CD8-positive, alpha-beta memory T cell (primary cell): ENCODE measurements at regions of chr4 and their contacts with region 1.

Region 1: GRCh38 chr4:56387023-56388001 is at the start of gene AASDH:
- DNase-seq: peak; percentile 88 to 96 (median 94)
- H3K4me3 ChIP-seq: peak within 1 kb of the TSS; percentile 79
- H3K4me3 Mint-ChIP-seq: peak within 1 kb of the TSS; percentile 88 to 99 (median 93)
- H3K27ac ChIP-seq: peak within 1 kb of the TSS; percentile 97
- H3K27ac Mint-ChIP-seq: peak within 1 kb of the TSS; percentile 97 to 99 (median 98)
- H3K4me1 ChIP-seq: peaks cover 24% of the 10 kb centered on the region
- H3K4me1 Mint-ChIP-seq: peaks cover 39 to 50% (median 43%) of the 10 kb centered on the region in 3 donors
- H3K27me3 ChIP-seq: no peaks in the 10 kb centered on the region
- H3K27me3 Mint-ChIP-seq: no peaks in the 10 kb centered on the region
- total RNA-seq, gene AASDH: 8.5 to 13.0 TPM

Region 2: GRCh38 chr4:55948726-55949474 is 438.4 kb before region 1 on chr4 and contains the start of gene CEP135:
- CTCF ChIA-PET with region 1: interaction called, 8 read pairs
- POLR2A ChIA-PET with region 1: interaction called, 13 read pairs
- DNase-seq: peak; percentile 88 to 95 (median 91)
- H3K4me3 ChIP-seq: peak within 1 kb of the TSS; percentile 87
- H3K4me3 Mint-ChIP-seq: peak within 1 kb of the TSS; percentile 86 to 97 (median 94)
- H3K27ac ChIP-seq: peak within 1 kb of the TSS; percentile 82
- H3K27ac Mint-ChIP-seq: peak within 1 kb of the TSS; percentile 71 to 98 (median 94)
- H3K4me1 ChIP-seq: peaks cover 29% of the 10 kb centered on the region
- H3K4me1 Mint-ChIP-seq: peaks cover 36 to 53% (median 52%) of the 10 kb centered on the region in 3 donors
- H3K27me3 ChIP-seq: no peaks in the 10 kb centered on the region
- H3K27me3 Mint-ChIP-seq: no peaks in the 10 kb centered on the region
- total RNA-seq, gene CEP135: 15.8 to 16.1 TPM

Region 3: DNA sequence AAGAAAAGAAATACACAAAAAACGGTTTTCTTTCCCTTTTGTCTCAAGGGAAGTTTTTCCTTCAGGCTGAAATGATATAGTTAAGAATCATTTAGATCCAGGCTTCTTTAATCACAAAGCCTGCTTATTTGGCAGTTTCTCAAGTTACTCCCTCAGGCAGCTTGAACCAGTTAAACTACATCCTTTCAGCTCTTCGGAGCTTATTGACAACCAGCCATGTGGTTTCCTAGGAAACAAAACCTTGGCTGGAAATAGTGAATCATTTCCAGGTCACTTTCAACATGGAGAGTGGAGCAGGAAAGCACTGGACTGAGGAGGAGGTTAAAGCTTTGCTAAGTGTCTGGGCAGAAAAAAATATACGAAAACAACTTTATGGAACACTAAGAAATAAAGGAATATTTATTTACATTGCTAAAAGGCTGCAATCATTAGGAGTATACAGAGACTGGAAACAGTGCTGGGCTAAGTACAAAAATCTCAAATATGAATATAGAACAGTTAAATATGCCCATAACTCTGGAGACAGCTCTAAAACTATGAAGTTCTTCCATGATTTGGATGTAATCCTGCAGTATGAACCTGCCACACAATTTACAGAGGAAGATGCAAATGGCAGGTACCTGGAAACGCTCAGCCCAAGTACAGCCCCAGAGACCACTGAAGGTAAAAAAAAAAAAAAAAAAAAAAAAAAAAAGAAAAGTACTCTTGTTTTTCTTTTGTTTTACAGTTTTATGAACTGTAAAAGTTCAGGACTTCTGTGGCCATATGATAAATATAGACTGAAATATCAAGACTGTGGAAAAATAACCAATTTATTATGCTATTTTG is 23.1 kb after region 1 on chr4:
- CTCF ChIA-PET with region 1: no interaction called
- POLR2A ChIA-PET with region 1: no interaction called
- DNase-seq: no peak
- H3K4me3 ChIP-seq: no peak overlapping the region
- H3K4me3 Mint-ChIP-seq: no peak overlapping the region
- H3K27ac ChIP-seq: no peak overlapping the region
- H3K27ac Mint-ChIP-seq: peak overlapping the region in 1 of 8 donors; percentile 46
- H3K4me1 ChIP-seq: no peaks in the 10 kb centered on the region
- H3K4me1 Mint-ChIP-seq: peaks cover 6 to 19% (median 9%) of the 10 kb centered on the region in 3 donors
- H3K27me3 ChIP-seq: no peaks in the 10 kb centered on the region
- H3K27me3 Mint-ChIP-seq: no peaks in the 10 kb centered on the region

Region 4: GRCh38 chr4:56907489-56908205 is 520.3 kb after region 1 on chr4 and contains the start of gene REST:
- CTCF ChIA-PET with region 1: interaction called, 4 read pairs
- POLR2A ChIA-PET with region 1: interaction called, 11 read pairs
- DNase-seq: peak; percentile 74 to 88 (median 83)
- H3K4me3 ChIP-seq: peak within 1 kb of the TSS; percentile 77
- H3K4me3 Mint-ChIP-seq: peak within 1 kb of the TSS; percentile 89 to 96 (median 93)
- H3K27ac ChIP-seq: peak within 1 kb of the TSS; percentile 81
- H3K27ac Mint-ChIP-seq: peak within 1 kb of the TSS; percentile 79 to 95 (median 94)
- H3K4me1 ChIP-seq: peaks cover 40% of the 10 kb centered on the region
- H3K4me1 Mint-ChIP-seq: peaks cover 41 to 49% (median 46%) of the 10 kb centered on the region in 3 donors
- H3K27me3 ChIP-seq: no peaks in the 10 kb centered on the region
- H3K27me3 Mint-ChIP-seq: peaks cover 0 to 5% of the 10 kb centered on the region in 2 donors
- total RNA-seq, gene REST: 45.2 to 46.6 TPM

Region 5: DNA sequence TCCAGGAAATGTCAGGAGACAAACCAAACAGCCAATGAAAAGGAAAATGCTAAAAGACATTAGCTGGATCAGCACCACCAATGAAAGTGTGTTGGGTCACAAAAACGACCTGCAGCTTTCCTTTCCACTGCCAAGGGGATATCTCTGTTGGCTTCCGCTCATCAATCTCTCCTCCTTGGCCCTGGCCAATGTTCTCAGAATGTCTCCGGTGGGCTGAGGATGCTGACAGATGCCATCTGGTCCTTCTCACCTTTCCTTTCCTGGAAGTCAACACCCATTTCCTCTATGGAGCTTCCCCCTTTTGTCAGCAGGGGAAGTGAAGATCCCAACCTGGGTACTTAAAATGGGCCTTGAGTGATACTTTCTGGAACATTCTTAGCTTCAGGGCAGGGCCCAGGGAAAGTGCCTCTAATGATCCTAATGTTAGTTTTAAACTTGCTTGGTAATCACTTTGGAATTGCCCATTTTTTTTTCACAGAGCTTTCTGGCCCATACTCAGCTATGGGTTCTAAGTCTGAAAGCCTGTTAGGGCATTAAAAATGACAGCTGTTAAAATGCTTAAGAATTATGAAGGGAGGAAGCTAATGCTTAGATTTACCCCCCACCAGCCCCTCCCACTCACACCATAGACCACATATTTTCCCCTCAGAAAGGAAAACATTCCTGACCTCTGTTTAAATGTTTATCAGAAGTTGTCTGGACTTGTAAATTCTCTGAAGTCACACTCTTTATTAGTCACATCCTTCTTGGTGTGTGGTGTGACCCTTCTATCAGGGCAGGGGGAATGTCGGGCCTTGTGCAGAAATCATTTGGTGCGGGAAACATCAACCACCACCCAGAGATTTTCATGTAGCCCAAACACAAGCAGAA is 693.7 kb after region 1 on chr4:
- CTCF ChIA-PET with region 1: no interaction called
- POLR2A ChIA-PET with region 1: no interaction called
- DNase-seq: no peak
- H3K4me3 ChIP-seq: no peak overlapping the region
- H3K4me3 Mint-ChIP-seq: no peak overlapping the region
- H3K27ac ChIP-seq: no peak overlapping the region
- H3K27ac Mint-ChIP-seq: no peak overlapping the region
- H3K4me1 ChIP-seq: no peaks in the 10 kb centered on the region
- H3K4me1 Mint-ChIP-seq: no peaks in the 10 kb centered on the region
- H3K27me3 ChIP-seq: peaks cover 5% of the 10 kb centered on the region
- H3K27me3 Mint-ChIP-seq: peaks cover 7 to 46% of the 10 kb centered on the region in 2 donors